MCF 10A (cell line): ENCODE measurements at regions of chr5 and their contacts with region 1.

Region 1: GRCh38 chr5:132260714-132261551 is 3.4 kb downstream of the PDLIM4 start:
- DNase-seq: peak; percentile 97
- H3K4me3 Mint-ChIP-seq: peak overlapping the region; percentile 83
- H3K27ac Mint-ChIP-seq: peak overlapping the region; percentile 74
- H3K4me1 Mint-ChIP-seq: peaks cover 68% of the 10 kb centered on the region
- H3K27me3 Mint-ChIP-seq: no peaks in the 10 kb centered on the region
- CTCF ChIP-seq: no peak

Region 2: GRCh38 chr5:131281133-131281867 is 979.6 kb before region 1 on chr5:
- CTCF ChIA-PET with region 1: no interaction called
- POLR2A ChIA-PET with region 1: no interaction called
- intact Hi-C with region 1: no loop called
- DNase-seq: peak; percentile 34
- H3K4me3 Mint-ChIP-seq: peak overlapping the region; percentile 51
- H3K27ac Mint-ChIP-seq: peak overlapping the region; percentile 84
- H3K4me1 Mint-ChIP-seq: peaks cover 33% of the 10 kb centered on the region
- H3K27me3 Mint-ChIP-seq: no peaks in the 10 kb centered on the region
- CTCF ChIP-seq: no peak

Region 3: GRCh38 chr5:132363431-132364112 is 102.6 kb after region 1 on chr5:
- CTCF ChIA-PET with region 1: no interaction called
- POLR2A ChIA-PET with region 1: interaction called, 12 read pairs
- intact Hi-C with region 1: no loop called
- DNase-seq: peak; percentile 99
- H3K4me3 Mint-ChIP-seq: peak overlapping the region; percentile 45
- H3K27ac Mint-ChIP-seq: peak overlapping the region; percentile 99
- H3K4me1 Mint-ChIP-seq: peaks cover 52% of the 10 kb centered on the region
- H3K27me3 Mint-ChIP-seq: no peaks in the 10 kb centered on the region
- CTCF ChIP-seq: no peak